Endothelial cell of umbilical vein (primary cell): ENCODE measurements at regions of chr17 and their contacts with region 1.

Region 1: GRCh38 chr17:60743799-60744198 is 66.1 kb downstream of the BCAS3 start:
- DNase-seq: peak; percentile 51
- H3K4me3 ChIP-seq: no peak overlapping the region
- H3K27ac ChIP-seq: peak overlapping the region; percentile 10
- H3K4me1 ChIP-seq: peaks cover 4% of the 10 kb centered on the region
- H3K27me3 ChIP-seq: no peaks in the 10 kb centered on the region
- CTCF ChIP-seq: no peak
- POLR2A ChIP-seq: no peak

Region 2: DNA sequence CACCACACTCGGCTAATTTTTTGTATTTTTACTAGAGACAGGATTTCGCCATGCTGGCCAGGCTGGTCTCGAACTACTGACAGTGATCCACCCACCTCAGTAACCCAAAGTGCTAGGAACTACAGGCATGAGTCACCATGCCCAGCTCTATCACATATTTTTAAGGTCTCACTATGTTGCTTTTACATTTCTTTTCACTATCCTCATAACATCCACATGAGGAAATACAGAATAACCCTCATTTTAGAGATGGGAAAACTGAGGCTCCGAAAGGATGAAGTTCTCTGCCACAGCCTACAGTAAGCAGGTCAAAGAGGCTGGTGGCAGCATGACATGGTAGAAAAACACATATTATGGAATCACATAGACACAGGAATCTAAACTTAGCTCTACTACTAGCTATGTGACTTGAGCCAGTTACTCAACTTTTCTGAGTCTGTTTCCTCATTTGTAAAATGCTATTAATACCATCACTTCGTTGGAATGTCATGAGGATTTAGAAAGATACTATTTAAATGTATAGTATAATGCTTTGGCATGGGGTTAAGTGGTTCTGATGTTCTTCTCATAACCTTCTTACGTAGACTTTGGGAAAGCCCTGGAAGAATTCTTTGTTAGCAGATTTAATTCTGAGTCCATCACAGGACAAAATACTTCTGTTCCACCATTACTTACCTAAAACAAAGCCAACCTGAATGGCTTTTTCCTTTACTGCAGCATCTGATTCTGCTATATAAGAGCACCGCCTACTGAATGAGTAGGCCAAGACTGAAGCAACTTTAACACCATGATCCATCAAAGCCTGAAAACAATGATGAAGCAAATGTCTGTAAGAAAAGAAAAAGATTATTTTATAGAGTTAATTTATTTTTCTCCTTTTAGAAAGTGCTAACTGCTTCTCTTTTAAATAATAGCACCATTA is 249.7 kb before region 1 on chr17:
- CTCF ChIA-PET with region 1: no interaction called
- POLR2A ChIA-PET with region 1: interaction called, 10 read pairs
- dilution Hi-C with region 1: no loop called
- intact Hi-C with region 1: no loop called
- DNase-seq: no peak
- H3K4me3 ChIP-seq: no peak overlapping the region
- H3K27ac ChIP-seq: no peak overlapping the region
- H3K4me1 ChIP-seq: no peaks in the 10 kb centered on the region
- H3K27me3 ChIP-seq: no peaks in the 10 kb centered on the region
- CTCF ChIP-seq: no peak
- POLR2A ChIP-seq: no peak

Region 3: DNA sequence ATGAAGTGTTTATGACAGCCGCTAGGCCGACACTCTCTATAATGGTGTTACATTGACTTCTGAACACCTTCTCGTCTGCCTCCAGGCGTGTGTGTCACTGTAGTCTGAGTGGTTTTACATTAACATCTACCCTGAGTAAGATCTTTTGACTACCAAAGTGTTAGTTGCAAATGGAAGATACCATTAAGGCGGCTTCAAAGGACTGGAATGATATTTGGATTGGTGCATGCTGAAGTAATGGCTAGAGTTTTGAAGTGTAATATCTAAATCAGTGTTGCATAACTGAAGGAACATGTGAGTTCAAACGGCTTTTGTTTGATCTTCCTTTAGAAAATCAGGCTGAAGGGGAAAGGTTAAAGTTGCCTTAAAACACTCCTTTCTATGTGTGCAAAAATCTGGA is 13.9 kb before region 1 on chr17:
- CTCF ChIA-PET with region 1: interaction called, 11 read pairs
- POLR2A ChIA-PET with region 1: no interaction called
- dilution Hi-C with region 1: no loop called
- intact Hi-C with region 1: no loop called
- DNase-seq: peak; percentile 1
- H3K4me3 ChIP-seq: no peak overlapping the region
- H3K27ac ChIP-seq: no peak overlapping the region
- H3K4me1 ChIP-seq: peaks cover 4% of the 10 kb centered on the region
- H3K27me3 ChIP-seq: no peaks in the 10 kb centered on the region
- CTCF ChIP-seq: no peak
- POLR2A ChIP-seq: no peak

Region 4: DNA sequence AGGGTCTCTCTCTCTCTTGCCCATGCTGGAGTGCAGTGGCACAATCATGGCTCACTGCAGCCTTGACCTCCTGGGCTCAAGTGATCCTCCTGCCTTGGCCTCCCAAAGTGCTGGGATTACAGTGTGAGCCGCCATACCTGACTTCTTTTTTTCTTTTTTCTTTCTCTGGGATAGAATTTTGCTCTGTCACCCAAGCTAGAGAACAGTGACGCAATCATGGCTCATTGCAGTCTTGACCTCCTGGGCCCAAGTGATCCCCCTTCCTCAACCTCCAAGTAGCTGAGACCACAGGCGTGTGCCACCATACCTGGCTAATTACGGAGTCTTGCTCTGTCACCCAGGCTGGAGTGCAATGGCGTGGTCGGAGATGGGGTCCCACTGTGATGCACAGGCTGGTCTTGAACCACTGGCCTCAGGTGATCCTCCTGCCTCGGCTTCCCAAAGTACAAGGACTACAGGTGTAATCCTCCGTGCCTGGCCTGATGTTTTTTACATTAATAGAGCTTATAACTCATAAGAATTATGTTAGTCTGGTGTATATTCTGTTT is 10.3 kb after region 1 on chr17:
- CTCF ChIA-PET with region 1: no interaction called
- POLR2A ChIA-PET with region 1: no interaction called
- dilution Hi-C with region 1: no loop called
- intact Hi-C with region 1: no loop called
- DNase-seq: no peak
- H3K4me3 ChIP-seq: no peak overlapping the region
- H3K27ac ChIP-seq: no peak overlapping the region
- H3K4me1 ChIP-seq: no peaks in the 10 kb centered on the region
- H3K27me3 ChIP-seq: no peaks in the 10 kb centered on the region
- CTCF ChIP-seq: no peak
- POLR2A ChIP-seq: no peak